OCI-LY7 (cell line): ENCODE measurements at regions of chr2 and their contacts with region 1.

Region 1: GRCh38 chr2:199739413-199740110 is 111.4 kb downstream of the FTCDNL1 start:
- DNase-seq: peak; percentile 62
- H3K4me3 ChIP-seq: no peak overlapping the region
- H3K27ac ChIP-seq: no peak overlapping the region
- H3K4me1 ChIP-seq: no peaks in the 10 kb centered on the region
- CTCF ChIP-seq: peak; percentile 99

Region 2: DNA sequence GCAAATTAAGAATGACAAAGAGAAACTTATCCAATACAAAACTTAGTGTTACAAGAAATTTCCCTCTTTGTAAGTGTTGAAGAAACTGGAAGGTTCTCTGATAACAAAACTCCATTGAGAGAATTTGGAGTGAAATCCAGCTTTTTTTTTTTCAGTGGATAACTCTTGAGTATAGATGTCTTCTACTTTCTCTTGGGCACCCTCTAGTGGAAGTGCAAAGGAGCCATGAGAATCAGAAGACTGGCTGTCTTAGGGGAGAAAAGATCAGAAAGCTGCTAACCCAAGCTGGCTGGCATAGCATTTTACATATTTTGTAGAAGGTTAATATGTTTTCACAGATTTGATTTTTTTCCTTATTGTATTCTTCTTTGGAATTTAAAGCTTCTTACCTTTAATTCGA is 143.0 kb before region 1 on chr2:
- CTCF ChIA-PET with region 1: no interaction called
- POLR2A ChIA-PET with region 1: interaction called, 3 read pairs
- intact Hi-C with region 1: loop called (anchors 10 kb)
- DNase-seq: peak; percentile 37
- H3K4me3 ChIP-seq: no peak overlapping the region
- H3K27ac ChIP-seq: no peak overlapping the region
- H3K4me1 ChIP-seq: no peaks in the 10 kb centered on the region
- CTCF ChIP-seq: peak; percentile 86